ENCODE measurements at regions of chr9 and their contacts with region 1.

Region 1: GRCh38 chr9:31119882-31120454 is 1264.5 kb upstream of the ACO1 start:
- DNase-seq: no peak
- ATAC-seq: peak; percentile 41

Region 2: DNA sequence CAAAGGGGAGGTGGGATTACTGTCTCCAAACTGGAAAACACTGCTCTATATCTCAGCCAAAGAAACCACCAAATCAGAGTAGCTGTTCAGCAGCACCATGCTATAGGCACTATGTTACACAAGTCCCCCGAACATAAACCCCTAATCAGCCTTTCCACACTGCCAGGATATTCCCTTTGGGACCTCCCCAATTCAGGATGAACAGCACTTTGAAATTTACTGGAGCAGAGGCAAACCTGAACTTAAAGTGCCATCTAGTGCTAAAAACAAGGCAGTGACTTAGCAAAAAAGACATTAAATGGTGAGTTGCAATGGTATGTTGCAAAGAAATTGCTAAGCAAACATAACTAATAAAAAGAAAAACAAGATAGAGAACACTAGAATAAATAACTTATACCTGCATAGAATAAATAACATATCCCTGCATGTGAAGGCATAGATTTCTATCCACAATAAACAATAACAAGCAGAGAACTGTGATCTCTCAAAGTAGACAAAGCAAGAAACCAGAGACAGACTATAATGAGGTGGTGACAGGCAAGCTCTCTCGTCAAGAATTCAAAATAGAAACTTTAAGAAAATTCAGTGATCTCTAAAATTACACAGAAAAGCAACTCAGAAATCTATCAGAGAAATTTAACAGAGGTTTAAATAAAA is 680.1 kb after region 1 on chr9:
- intact Hi-C with region 1: loop called (anchors 10 kb)
- DNase-seq: no peak
- ATAC-seq: no peak